Activated CD4-positive, alpha-beta T cell treated with anti-CD3 and anti-CD28 coated beads for 36 hours (primary cell): ENCODE measurements at regions of chr14 and their contacts with region 1.

Region 1: DNA sequence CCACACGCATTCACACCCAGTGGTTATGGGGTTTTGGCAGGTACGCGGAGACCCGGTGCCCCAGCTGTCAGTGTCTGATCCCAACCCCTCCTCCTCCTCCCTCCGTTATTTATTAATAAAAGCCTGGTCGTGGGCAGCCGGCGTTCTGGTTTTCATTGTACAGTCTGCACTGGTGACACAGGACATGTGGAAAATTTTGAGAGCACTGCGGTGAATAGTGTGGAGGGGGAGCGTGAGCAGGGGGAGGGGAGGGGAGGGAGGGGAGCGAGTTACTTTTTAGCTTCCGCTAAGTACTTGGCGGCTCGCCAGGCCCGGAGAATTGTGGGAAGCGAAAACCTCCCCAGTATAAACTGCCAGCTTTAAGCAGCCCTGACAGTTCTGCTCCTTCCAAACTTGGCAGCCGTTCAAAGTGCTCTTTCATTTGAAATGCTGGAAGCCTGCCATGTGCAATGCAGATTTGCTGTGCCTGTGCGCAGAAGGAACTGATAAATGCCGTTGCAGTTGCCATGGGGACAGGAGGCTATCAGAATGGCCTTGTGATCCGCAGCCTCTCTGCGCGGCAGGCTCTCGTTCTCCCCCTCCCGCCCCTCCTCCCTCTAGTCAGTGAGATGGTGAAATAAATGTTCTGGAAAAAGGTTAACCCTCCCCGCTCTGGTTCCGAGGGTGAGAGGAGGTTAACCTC is 11.7 kb upstream of the IRF2BPL start:
- DNase-seq: peak; percentile 98
- ATAC-seq: peak; percentile 66
- H3K4me3 Mint-ChIP-seq: peak overlapping the region; percentile 63
- H3K27ac Mint-ChIP-seq: peak overlapping the region; percentile 93
- H3K4me1 Mint-ChIP-seq: peaks cover 89% of the 10 kb centered on the region
- H3K27me3 Mint-ChIP-seq: no peaks in the 10 kb centered on the region

Region 2: DNA sequence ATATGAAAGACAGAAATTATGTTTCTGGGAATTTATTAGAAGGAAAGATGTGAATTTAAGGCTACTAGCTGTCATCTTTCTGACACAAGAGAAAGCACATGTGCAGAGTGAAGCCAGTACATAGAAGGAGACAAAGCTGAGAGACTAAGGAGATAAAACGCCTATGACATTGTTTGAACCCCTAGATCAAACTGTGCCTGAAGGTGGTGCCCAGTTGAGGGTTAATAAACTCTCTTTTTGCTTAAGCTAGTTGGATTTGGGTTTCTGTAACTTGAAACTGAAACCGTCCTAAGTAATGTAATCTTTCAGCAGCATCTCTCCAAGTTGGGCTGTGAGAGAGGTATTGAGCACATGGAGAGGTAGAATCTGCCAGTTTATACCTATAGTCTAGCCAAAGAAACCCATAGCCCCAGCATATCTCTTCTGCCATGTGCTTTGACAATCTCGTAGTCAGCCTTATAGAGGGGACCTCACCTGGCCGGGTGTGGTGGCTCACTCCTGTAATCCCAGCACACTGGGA is 129.8 kb before region 1 on chr14:
- CTCF ChIA-PET with region 1: interaction called, 34 read pairs
- POLR2A ChIA-PET with region 1: no interaction called
- intact Hi-C with region 1: loop called in 1 of 2 experiments (anchors 1 kb)
- DNase-seq: no peak
- ATAC-seq: no peak
- H3K4me3 Mint-ChIP-seq: no peak overlapping the region
- H3K27ac Mint-ChIP-seq: no peak overlapping the region
- H3K4me1 Mint-ChIP-seq: peaks cover 26% of the 10 kb centered on the region
- H3K27me3 Mint-ChIP-seq: no peaks in the 10 kb centered on the region

Region 3: DNA sequence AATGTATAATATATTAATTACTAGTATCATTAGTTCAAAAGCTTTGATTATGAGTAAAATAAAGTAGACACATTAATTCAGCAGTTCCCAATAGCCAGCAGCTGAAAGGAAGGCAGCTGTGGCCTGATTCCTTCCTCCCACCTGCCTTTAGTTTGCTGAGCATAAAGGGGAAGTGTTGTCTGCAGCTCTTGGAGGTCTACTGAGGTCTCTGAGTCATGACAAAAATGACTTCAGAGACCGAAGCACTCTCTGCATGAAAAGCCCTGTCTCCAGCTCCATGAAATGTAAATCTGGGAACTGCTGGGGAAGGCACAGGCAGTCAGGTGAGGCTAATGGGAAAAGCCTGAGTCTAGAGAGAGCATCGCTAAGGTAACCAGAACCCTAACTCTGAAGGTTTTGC is 1295.3 kb after region 1 on chr14:
- CTCF ChIA-PET with region 1: no interaction called
- POLR2A ChIA-PET with region 1: no interaction called
- intact Hi-C with region 1: no loop called
- DNase-seq: no peak
- ATAC-seq: no peak
- H3K4me3 Mint-ChIP-seq: no peak overlapping the region
- H3K27ac Mint-ChIP-seq: no peak overlapping the region
- H3K4me1 Mint-ChIP-seq: no peaks in the 10 kb centered on the region
- H3K27me3 Mint-ChIP-seq: peaks cover 12% of the 10 kb centered on the region